Sigmoid colon (tissue), 7 donors: ENCODE measurements at regions of chr7 and their contacts with region 1.

Region 1: GRCh38 chr7:1225441-1226185 is 7.1 kb upstream of the UNCX start:
- DNase-seq: no peak
- H3K4me3 ChIP-seq: no peak overlapping the region
- H3K27ac ChIP-seq: no peak overlapping the region
- H3K4me1 ChIP-seq: peaks cover 0 to 28% (median 23%) of the 10 kb centered on the region in 4 donors
- H3K27me3 ChIP-seq: peaks cover 77 to 97% (median 95%) of the 10 kb centered on the region in 3 donors
- CTCF ChIP-seq: peak; percentile 36 to 84 (median 50)
- EP300 ChIP-seq: no peak
- POLR2A ChIP-seq: no peak

Region 2: DNA sequence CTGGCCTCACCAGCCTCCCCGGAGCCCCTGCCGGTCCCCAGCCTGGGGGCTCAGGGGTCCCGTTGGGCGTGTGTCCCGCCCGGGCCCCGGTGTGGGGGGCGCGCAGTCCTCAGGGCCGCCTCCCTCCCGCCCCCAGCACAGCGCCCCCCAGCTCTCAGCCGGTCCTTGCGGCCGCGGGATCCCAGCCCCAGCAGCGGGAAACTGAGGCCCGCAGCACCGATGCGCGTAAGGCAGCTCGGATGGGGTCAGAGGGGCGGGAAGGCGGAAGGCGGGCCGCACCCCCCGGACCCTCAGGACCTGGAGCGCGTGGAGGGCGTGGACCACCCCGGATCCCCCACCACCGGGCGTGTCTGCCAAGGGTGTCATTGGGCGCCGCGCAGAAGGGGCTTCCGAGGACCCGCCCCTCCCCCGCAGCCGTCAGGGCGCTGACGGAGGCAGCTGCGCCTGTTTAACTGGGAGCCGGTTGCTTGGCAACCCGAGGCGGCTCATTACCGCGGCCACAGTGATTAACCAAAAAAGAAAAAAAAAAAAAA is 22.0 kb after region 1 on chr7:
- intact Hi-C with region 1: no loop called
- DNase-seq: no peak
- H3K4me3 ChIP-seq: no peak overlapping the region
- H3K27ac ChIP-seq: no peak overlapping the region
- H3K4me1 ChIP-seq: peaks cover 0 to 28% (median 26%) of the 10 kb centered on the region in 4 donors
- H3K27me3 ChIP-seq: peaks cover 69 to 100% (median 94%) of the 10 kb centered on the region in 3 donors
- CTCF ChIP-seq: no peak
- EP300 ChIP-seq: no peak
- POLR2A ChIP-seq: no peak

Region 3: GRCh38 chr7:1412322-1413261 is 187.0 kb after region 1 on chr7:
- intact Hi-C with region 1: loop called (anchors 5 kb)
- DNase-seq: peak; percentile 82
- H3K4me3 ChIP-seq: peak overlapping the region in 1 of 4 donors; percentile 10
- H3K27ac ChIP-seq: no peak overlapping the region
- H3K4me1 ChIP-seq: peaks cover 0 to 11% (median 8%) of the 10 kb centered on the region in 4 donors
- H3K27me3 ChIP-seq: peaks cover 11 to 70% (median 55%) of the 10 kb centered on the region in 3 donors
- CTCF ChIP-seq: peak in 3 of 4 experiments; percentile 39 to 62 (median 41)
- EP300 ChIP-seq: no peak
- POLR2A ChIP-seq: no peak

Region 4: DNA sequence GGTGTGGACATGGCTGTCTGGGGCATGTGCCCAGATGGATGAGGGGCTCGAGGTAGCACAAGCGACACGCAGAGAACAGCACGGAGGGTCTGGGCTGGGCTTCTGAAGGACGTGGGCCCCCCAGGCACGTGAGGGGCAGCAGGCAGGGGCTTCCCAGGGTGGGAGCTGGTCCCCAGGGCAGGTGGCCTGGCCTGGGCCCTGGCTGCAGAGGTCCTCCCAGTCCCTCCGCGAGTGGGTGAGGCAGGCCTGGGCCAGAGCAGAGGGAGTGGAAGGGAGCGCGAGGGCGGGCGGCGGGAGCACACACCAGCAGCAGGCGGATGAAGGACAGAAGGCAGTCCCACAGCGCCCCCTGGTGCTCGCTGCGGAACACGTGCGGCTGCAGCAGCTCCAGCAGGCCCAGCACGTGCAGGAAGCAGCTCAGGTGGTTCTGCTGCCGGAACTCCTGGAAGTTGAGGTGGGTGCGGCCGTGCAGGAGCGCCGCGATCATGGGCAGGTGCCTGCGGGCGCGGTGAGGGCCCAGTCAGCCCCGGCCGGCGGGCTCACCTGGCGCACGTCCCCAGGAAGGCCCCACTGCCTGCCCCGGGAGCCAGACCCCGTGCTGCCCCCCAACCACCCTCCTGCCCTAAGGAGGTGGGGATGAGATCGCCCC is 248.4 kb after region 1 on chr7:
- intact Hi-C with region 1: loop called (anchors 1 kb)
- DNase-seq: peak; percentile 93
- H3K4me3 ChIP-seq: no peak overlapping the region
- H3K27ac ChIP-seq: no peak overlapping the region
- H3K4me1 ChIP-seq: peaks cover 0 to 10% (median 5%) of the 10 kb centered on the region in 4 donors
- H3K27me3 ChIP-seq: no peaks in the 10 kb centered on the region
- CTCF ChIP-seq: peak; percentile 77 to 94 (median 88)
- EP300 ChIP-seq: no peak
- POLR2A ChIP-seq: no peak